Panc1 (cell line): ENCODE measurements at regions of chr7 and their contacts with region 1.

Region 1: DNA sequence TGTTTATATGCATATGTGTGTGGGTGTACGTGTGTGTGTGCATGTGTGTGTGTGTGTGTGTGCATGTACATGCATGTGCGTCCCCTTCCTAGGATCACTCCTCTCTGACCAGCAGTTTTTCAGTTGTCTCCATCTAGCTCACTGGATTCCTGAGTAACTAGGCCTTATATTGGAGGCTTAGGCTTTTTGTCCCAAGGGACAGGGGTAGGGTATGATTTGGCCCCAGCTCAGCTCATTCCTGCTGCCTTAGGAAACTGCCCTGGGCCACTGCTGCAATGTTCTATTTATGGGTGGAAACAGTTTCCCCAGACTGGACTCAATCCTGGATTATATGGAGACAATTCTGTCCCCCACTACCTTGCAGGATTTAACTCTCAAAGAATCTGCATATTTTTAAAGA is 68.8 kb upstream of the SDK1 start:
- DNase-seq: no peak
- ATAC-seq: no peak
- H3K4me3 ChIP-seq: no peak overlapping the region
- H3K27ac ChIP-seq: no peak overlapping the region
- H3K4me1 ChIP-seq: no peaks in the 10 kb centered on the region
- H3K27me3 ChIP-seq: no peaks in the 10 kb centered on the region
- CTCF ChIP-seq: no peak

Region 2: DNA sequence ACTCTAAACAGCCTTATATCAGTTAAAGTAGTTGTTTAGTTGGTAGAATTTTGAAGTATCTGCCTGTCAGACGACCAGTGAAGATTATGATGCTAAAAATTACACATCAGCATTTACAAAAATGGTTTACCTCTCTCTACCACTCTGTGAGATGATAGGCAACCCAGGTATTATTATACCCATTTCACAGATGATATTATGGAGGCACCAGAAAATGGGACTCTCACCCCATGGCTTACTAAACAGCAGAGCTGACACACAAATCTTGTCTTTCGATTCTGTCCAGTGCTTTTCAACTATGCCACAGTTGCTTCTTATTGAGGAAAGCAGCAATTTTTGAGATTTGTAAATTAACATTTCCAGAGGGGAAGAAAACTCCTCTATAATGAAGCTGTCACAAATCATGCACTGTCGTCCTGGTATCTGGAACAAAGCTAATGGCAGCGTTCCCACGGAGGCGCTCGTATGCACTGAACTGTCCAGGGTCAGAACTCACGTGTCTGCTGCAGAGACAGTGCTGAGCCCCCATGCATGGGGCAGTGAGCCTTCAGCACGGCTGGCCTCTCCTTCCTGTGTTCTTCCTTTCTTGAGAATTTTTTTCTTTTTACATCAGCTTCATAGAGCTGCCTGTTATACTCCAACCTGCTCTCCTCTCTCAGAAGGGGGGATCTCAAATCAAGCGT is 449.9 kb after region 1 on chr7:
- CTCF ChIA-PET with region 1: no interaction called
- POLR2A ChIA-PET with region 1: interaction called, 12 read pairs
- in situ Hi-C with region 1: no loop called
- intact Hi-C with region 1: no loop called
- DNase-seq: no peak
- ATAC-seq: no peak
- H3K4me3 ChIP-seq: no peak overlapping the region
- H3K27ac ChIP-seq: no peak overlapping the region
- H3K4me1 ChIP-seq: no peaks in the 10 kb centered on the region
- H3K27me3 ChIP-seq: no peaks in the 10 kb centered on the region
- CTCF ChIP-seq: no peak